ENCODE measurements at regions of chr4 and their contacts with region 1.

Region 1: DNA sequence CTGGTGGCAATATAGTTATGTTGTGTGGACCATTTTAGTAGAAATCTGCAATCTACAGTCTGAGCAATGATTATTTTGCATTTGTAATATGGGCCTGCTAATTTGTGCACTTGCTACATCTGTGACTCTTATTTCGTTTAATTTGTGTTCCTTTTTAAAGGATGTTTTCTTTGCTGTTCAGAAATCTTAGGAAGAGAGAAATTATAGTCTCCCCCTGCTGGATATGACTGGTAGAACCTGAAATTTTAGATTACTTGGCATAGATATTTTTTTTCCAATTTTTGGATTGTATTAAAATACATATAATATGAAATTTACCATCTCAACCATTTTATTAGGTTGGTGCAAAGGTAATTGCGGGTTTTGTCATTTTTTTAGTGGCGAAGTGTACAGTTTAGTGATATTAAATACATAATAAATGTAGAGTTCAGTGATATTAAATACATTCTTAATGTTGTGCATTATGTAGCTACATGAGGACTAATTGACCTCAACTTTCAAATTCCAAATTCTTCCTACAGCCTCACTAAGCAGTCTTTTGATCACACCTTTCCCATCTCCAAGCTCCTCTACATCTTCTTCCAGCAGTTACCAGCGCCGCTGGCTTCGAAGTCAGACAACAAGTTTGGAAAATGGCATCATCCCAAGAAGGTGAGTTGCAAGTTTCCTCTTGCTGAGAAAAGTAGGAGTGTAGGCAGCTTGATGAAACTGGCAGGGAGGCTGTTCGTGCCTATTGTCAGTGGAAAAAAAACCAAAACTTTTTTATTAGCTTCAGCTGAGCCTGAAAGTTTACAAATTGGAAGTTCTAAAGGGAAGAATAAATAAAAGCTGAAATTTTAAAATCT is 82.2 kb downstream of the FNIP2 start:
- DNase-seq: peak; percentile 10
- H3K4me3 ChIP-seq: no peak overlapping the region
- H3K27ac ChIP-seq: no peak overlapping the region
- H3K27me3 ChIP-seq: no peaks in the 10 kb centered on the region
- CTCF ChIP-seq: peak; percentile 70

Region 2: DNA sequence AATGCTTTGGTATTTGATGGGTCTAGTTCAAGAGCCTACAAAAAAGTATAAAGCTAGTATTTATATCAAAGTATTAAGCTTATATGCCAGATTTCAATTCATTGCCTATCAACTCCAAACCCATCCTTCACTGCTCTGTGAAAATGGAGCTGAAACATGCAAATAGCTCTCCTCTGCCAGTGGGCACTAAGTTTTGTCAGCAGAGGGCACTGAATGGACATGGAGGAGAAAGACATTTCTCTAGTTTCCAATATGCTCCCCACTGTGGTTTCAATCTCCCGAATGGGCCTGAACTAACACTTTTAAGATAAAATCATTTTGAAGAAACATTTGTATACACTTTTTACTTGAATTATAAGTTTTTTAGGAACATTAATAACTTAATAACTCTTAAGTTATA is 140.2 kb before region 1 on chr4:
- CTCF ChIA-PET with region 1: interaction called, 31 read pairs
- POLR2A ChIA-PET with region 1: no interaction called
- DNase-seq: no peak
- H3K4me3 ChIP-seq: no peak overlapping the region
- H3K27ac ChIP-seq: no peak overlapping the region
- H3K27me3 ChIP-seq: no peaks in the 10 kb centered on the region
- CTCF ChIP-seq: peak; percentile 40

Region 3: GRCh38 chr4:158722917-158723793 is 127.9 kb before region 1 on chr4 and contains the start of gene PPID:
- CTCF ChIA-PET with region 1: interaction called, 20 read pairs
- POLR2A ChIA-PET with region 1: no interaction called
- DNase-seq: peak; percentile 21
- H3K4me3 ChIP-seq: peak within 1 kb of the TSS; percentile 89
- H3K27ac ChIP-seq: peak within 1 kb of the TSS; percentile 68
- H3K27me3 ChIP-seq: no peaks in the 10 kb centered on the region
- CTCF ChIP-seq: no peak
- polyA plus RNA-seq, gene PPID: 19.6 and 22.9 TPM in 2 replicates

Region 4: DNA sequence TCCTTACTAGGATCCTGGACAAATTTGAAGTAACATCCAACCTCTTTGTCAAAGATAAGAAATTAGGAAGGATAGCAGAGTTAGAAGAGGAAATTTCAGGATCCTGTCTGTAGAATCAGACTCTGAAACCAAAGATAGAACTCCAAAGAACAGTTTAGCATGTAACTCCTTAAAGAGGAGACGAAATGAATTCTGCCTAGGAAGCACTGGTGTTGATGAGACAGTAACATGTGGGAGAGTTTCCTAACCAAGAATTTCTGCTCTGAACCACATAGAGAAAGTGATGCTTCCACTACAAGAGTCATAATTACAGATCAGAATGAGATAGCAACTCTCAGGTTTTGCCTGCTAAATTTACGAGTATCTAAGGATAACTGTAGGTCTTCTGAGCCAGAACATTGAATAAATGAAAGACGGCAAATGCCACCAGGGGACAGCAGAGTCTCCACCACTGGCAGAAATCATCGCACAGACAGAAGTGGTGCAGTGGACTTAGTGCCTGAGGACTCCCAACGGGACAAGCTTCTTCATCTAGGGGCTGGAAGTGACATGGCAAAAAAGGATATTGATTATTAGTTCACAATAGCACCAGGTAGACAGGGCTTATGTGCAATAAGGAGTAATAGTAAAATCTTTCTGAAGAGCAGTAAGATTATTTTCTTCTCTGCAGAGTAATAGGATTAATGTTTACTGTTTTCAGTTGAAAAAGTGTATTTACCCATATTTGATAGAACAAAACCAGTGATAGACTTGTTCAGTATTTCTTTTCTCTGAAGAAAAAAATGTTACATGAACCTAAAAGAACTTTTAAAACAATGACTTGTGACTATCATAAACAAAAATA is 121.1 kb before region 1 on chr4:
- CTCF ChIA-PET with region 1: interaction called, 41 read pairs
- POLR2A ChIA-PET with region 1: no interaction called
- DNase-seq: peak; percentile 33
- H3K4me3 ChIP-seq: no peak overlapping the region
- H3K27ac ChIP-seq: no peak overlapping the region
- H3K27me3 ChIP-seq: no peaks in the 10 kb centered on the region
- CTCF ChIP-seq: peak; percentile 93

Region 5: DNA sequence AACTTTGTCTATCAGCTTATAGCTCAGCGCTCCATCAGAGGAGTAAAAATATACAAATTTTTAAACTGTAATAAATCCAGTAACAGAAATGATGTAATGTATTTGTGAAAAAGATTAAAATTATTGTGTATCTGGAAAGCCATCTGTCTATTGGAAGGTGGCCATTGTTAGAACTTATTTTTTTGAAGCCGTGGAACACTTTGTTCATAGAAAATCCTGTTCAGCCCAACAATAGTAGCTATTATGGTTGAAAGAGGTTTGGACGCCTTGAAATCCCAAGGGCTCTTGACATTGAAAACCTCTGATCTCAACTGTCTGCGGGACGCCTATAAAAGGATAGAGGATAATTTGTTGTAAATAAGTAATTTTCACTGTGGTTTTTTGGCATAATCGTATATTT is 350.1 kb after region 1 on chr4:
- CTCF ChIA-PET with region 1: interaction called, 86 read pairs
- POLR2A ChIA-PET with region 1: no interaction called
- DNase-seq: no peak
- H3K4me3 ChIP-seq: no peak overlapping the region
- H3K27ac ChIP-seq: no peak overlapping the region
- H3K27me3 ChIP-seq: no peaks in the 10 kb centered on the region
- CTCF ChIP-seq: no peak